CD8-positive, alpha-beta memory T cell (primary cell): ENCODE measurements at regions of chr19 and their contacts with region 1.

Region 1: GRCh38 chr19:29523568-29523967 is 2.2 kb upstream of the VSTM2B start:
- DNase-seq: peak in 1 of 5 donors; percentile 23
- H3K4me3 ChIP-seq: no peak overlapping the region
- H3K4me3 Mint-ChIP-seq: peak overlapping the region in 4 of 7 donors; percentile 1 to 51 (median 6)
- H3K27ac ChIP-seq: no peak overlapping the region
- H3K27ac Mint-ChIP-seq: no peak overlapping the region
- H3K4me1 ChIP-seq: peaks cover 15% of the 10 kb centered on the region
- H3K4me1 Mint-ChIP-seq: peaks cover 9 to 27% (median 12%) of the 10 kb centered on the region in 3 donors
- H3K27me3 ChIP-seq: peaks cover 21% of the 10 kb centered on the region
- H3K27me3 Mint-ChIP-seq: peaks cover 43 to 70% of the 10 kb centered on the region in 2 donors

Region 2: GRCh38 chr19:29546583-29547190 is 23.1 kb after region 1 on chr19:
- CTCF ChIA-PET with region 1: no interaction called
- POLR2A ChIA-PET with region 1: no interaction called
- DNase-seq: no peak
- H3K4me3 ChIP-seq: no peak overlapping the region
- H3K4me3 Mint-ChIP-seq: no peak overlapping the region
- H3K27ac ChIP-seq: no peak overlapping the region
- H3K27ac Mint-ChIP-seq: no peak overlapping the region
- H3K4me1 ChIP-seq: no peaks in the 10 kb centered on the region
- H3K4me1 Mint-ChIP-seq: no peaks in the 10 kb centered on the region
- H3K27me3 ChIP-seq: no peaks in the 10 kb centered on the region
- H3K27me3 Mint-ChIP-seq: peaks cover 10 to 28% of the 10 kb centered on the region in 2 donors

Region 3: GRCh38 chr19:29680447-29680846 is 156.9 kb after region 1 on chr19:
- CTCF ChIA-PET with region 1: no interaction called
- POLR2A ChIA-PET with region 1: interaction called, 14 read pairs
- DNase-seq: peak; percentile 79 to 90 (median 86)
- H3K4me3 ChIP-seq: peak overlapping the region; percentile 50
- H3K4me3 Mint-ChIP-seq: peak overlapping the region; percentile 26 to 83 (median 78)
- H3K27ac ChIP-seq: peak overlapping the region; percentile 25
- H3K27ac Mint-ChIP-seq: peak overlapping the region; percentile 81 to 97 (median 94)
- H3K4me1 ChIP-seq: peaks cover 73% of the 10 kb centered on the region
- H3K4me1 Mint-ChIP-seq: peaks cover 64 to 81% (median 75%) of the 10 kb centered on the region in 3 donors
- H3K27me3 ChIP-seq: no peaks in the 10 kb centered on the region
- H3K27me3 Mint-ChIP-seq: no peaks in the 10 kb centered on the region